Activated B cell treated with CpG ODN at 0.5 μM for 24 hours (primary cell): ENCODE measurements at regions of chr9 and their contacts with region 1.

Region 1: GRCh38 chr9:120868676-120869359 is 8.2 kb downstream of the PHF19 start:
- DNase-seq: peak; percentile 96
- ATAC-seq: peak; percentile 92
- H3K4me3 Mint-ChIP-seq: peak overlapping the region; percentile 91
- H3K27ac Mint-ChIP-seq: peak overlapping the region; percentile 97
- H3K4me1 Mint-ChIP-seq: peaks cover 25% of the 10 kb centered on the region
- H3K27me3 Mint-ChIP-seq: no peaks in the 10 kb centered on the region
- CTCF ChIP-seq: no peak

Region 2: GRCh38 chr9:120714088-120714845 is 154.6 kb before region 1 on chr9 and contains the start of gene MEGF9:
- CTCF ChIA-PET with region 1: no interaction called
- POLR2A ChIA-PET with region 1: no interaction called
- intact Hi-C with region 1: loop called (anchors 2 kb)
- DNase-seq: peak; percentile 95
- ATAC-seq: peak; percentile 94
- H3K4me3 Mint-ChIP-seq: peak within 1 kb of the TSS; percentile 90
- H3K27ac Mint-ChIP-seq: peak within 1 kb of the TSS; percentile 86
- H3K4me1 Mint-ChIP-seq: peaks cover 38% of the 10 kb centered on the region
- H3K27me3 Mint-ChIP-seq: no peaks in the 10 kb centered on the region
- CTCF ChIP-seq: no peak
- total RNA-seq, gene MEGF9: 8.5 and 9.0 TPM in 2 replicates

Region 3: GRCh38 chr9:120842690-120843499 is 25.9 kb before region 1 on chr9 and contains the start of gene PSMD5:
- CTCF ChIA-PET with region 1: no interaction called
- POLR2A ChIA-PET with region 1: no interaction called
- intact Hi-C with region 1: loop called (anchors 1 kb)
- DNase-seq: peak; percentile 75
- ATAC-seq: peak; percentile 99
- H3K4me3 Mint-ChIP-seq: peak within 1 kb of the TSS; percentile 90
- H3K27ac Mint-ChIP-seq: peak within 1 kb of the TSS; percentile 91
- H3K4me1 Mint-ChIP-seq: peaks cover 42% of the 10 kb centered on the region
- H3K27me3 Mint-ChIP-seq: no peaks in the 10 kb centered on the region
- CTCF ChIP-seq: no peak
- total RNA-seq, gene PSMD5: 34.8 and 38.9 TPM in 2 replicates

Region 4: DNA sequence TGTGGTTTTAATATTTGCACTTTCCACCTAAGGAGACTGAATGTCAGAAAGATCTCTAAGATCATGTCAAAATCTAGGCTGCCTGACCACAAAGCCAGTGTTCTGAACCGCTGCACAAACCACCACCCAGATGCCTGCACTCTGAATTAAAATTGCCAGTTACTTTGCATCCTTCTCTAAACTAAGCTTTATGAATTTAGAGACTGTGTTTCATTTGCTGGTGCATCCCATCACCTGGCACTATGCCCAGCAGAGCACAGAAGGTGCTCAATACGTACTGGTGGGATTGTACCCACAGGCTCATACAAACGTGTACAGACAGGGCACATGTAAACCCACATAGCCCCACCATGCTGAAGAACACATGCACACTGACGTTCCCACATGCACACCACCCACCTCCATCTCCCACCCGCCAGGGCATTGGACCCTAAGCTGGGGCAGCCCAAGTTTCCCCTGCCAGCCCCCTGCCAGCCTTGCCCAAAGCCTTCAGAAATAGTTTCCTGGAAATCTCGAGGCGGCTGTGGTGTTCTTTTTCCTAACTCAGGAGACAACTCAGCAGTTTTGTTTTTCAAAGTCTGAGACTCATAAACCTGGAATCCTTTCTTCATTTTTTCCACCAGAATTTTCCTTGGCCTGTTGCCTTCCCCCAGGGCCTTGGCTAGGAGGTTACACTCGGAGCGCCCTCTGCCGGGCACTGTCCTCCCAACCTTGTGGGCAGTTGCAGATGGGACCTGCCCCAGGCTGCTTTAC is 67.4 kb after region 1 on chr9:
- CTCF ChIA-PET with region 1: interaction called, 26 read pairs
- POLR2A ChIA-PET with region 1: interaction called, 19 read pairs
- intact Hi-C with region 1: loop called (anchors 1 kb)
- DNase-seq: peak; percentile 72
- ATAC-seq: peak; percentile 37
- H3K4me3 Mint-ChIP-seq: peak overlapping the region; percentile 71
- H3K27ac Mint-ChIP-seq: peak overlapping the region; percentile 82
- H3K4me1 Mint-ChIP-seq: peaks cover 63% of the 10 kb centered on the region
- H3K27me3 Mint-ChIP-seq: no peaks in the 10 kb centered on the region
- CTCF ChIP-seq: peak; percentile 52

Region 5: DNA sequence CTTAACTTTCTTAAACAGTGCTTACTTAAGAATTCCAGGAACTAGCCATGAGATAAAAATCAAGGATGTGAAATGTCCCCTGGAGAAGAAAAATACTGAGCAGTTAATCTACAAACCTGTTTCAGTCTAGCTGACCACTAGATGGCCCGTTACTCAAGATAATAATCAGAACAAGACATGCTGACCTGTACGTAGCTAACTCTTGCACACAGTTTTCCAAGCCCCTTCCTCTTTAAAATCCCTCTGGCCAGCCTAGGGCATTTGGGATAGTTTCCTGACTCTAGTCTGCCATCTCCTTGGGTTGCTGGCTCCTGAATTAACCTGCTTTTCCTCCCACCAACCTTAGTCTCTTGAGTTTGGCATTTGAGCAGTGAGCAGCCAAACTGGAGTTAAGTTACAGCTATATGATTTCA is 117.0 kb after region 1 on chr9:
- CTCF ChIA-PET with region 1: interaction called, 10 read pairs
- POLR2A ChIA-PET with region 1: no interaction called
- intact Hi-C with region 1: loop called (anchors 5 kb)
- DNase-seq: no peak
- ATAC-seq: no peak
- H3K4me3 Mint-ChIP-seq: no peak overlapping the region
- H3K27ac Mint-ChIP-seq: no peak overlapping the region
- H3K4me1 Mint-ChIP-seq: no peaks in the 10 kb centered on the region
- H3K27me3 Mint-ChIP-seq: no peaks in the 10 kb centered on the region
- CTCF ChIP-seq: no peak

Region 6: GRCh38 chr9:121121582-121122087 is 252.8 kb after region 1 on chr9:
- CTCF ChIA-PET with region 1: no interaction called
- POLR2A ChIA-PET with region 1: no interaction called
- intact Hi-C with region 1: loop called (anchors 2 kb)
- DNase-seq: peak; percentile 84
- ATAC-seq: peak; percentile 99
- H3K4me3 Mint-ChIP-seq: peak overlapping the region; percentile 91
- H3K27ac Mint-ChIP-seq: peak overlapping the region; percentile 95
- H3K4me1 Mint-ChIP-seq: peaks cover 45% of the 10 kb centered on the region
- H3K27me3 Mint-ChIP-seq: no peaks in the 10 kb centered on the region
- CTCF ChIP-seq: no peak